H1 (cell line): ENCODE measurements at regions of chr6 and their contacts with region 1.

Region 1: DNA sequence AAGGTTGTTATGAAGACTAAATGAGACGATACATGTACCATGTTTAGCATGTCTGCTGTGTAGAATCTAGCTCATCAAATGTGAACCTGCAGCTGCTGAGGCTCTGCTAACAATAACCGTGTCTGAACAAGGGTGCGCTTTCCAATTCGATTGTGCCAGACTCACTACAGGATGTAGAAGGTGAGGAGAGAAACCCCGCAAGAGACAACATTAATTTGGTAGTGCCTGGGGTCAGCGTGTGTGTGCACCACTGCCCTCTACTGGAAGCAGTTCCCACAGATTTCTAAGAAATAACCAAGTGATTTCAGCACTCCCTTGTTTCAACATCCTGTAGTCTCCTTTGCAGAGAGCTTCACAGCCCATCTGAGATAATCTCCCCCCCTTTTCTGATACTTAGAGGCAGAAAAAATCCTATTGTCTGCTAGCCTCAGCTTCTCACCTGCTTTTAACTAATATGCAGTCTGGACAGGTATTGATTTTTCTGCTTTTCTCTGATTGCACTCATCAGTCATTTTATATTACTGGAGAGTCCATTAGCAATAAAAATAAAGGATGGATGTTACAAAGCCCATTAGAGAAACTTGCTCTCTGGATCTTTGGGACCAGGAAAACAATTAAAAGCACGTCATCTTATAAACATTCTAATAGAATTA is 96.7 kb upstream of the BACH2 start:
- DNase-seq: peak; percentile 47 to 80
- H3K4me3 ChIP-seq: no peak overlapping the region
- H3K27ac ChIP-seq: no peak overlapping the region
- H3K4me1 ChIP-seq: peaks cover 0 to 5% (median 1%) of the 10 kb centered on the region in 4 experiments; a peak in 2 of 7 replicates
- H3K27me3 ChIP-seq: no peaks in the 10 kb centered on the region
- CTCF ChIP-seq: peak; percentile 66 to 88 (median 81)
- EP300 ChIP-seq: no peak
- POLR2A ChIP-seq: no peak
- RAD21 ChIP-seq: peak; percentile 87 to 89

Region 2: GRCh38 chr6:90078513-90079289 is 314.7 kb before region 1 on chr6:
- CTCF ChIA-PET with region 1: no interaction called
- POLR2A ChIA-PET with region 1: no interaction called
- DNase-seq: no peak
- H3K4me3 ChIP-seq: no peak overlapping the region
- H3K27ac ChIP-seq: no peak overlapping the region
- H3K4me1 ChIP-seq: no peaks in the 10 kb centered on the region
- H3K27me3 ChIP-seq: no peaks in the 10 kb centered on the region
- CTCF ChIP-seq: no peak
- EP300 ChIP-seq: no peak
- POLR2A ChIP-seq: no peak
- RAD21 ChIP-seq: no peak

Region 3: GRCh38 chr6:90285611-90286381 is 107.6 kb before region 1 on chr6:
- CTCF ChIA-PET with region 1: interaction called, 94 read pairs
- POLR2A ChIA-PET with region 1: interaction called, 4 read pairs
- DNase-seq: no peak
- H3K4me3 ChIP-seq: no peak overlapping the region
- H3K27ac ChIP-seq: no peak overlapping the region
- H3K4me1 ChIP-seq: peaks cover 7 to 19% (median 12%) of the 10 kb centered on the region in 4 experiments; a peak in 6 of 7 replicates
- H3K27me3 ChIP-seq: no peaks in the 10 kb centered on the region
- CTCF ChIP-seq: no peak
- EP300 ChIP-seq: peak in 1 of 2 experiments; percentile 40; a peak in 1 of 3 replicates
- POLR2A ChIP-seq: no peak
- RAD21 ChIP-seq: 0 out of 4 replicates have a peak, but pooled peaks of 1 of the 2 experiments have one; percentile 20

Region 4: GRCh38 chr6:90343581-90343980 is 49.8 kb before region 1 on chr6:
- CTCF ChIA-PET with region 1: interaction called, 17 read pairs
- POLR2A ChIA-PET with region 1: no interaction called
- DNase-seq: no peak
- H3K4me3 ChIP-seq: no peak overlapping the region
- H3K27ac ChIP-seq: no peak overlapping the region
- H3K4me1 ChIP-seq: no peaks in the 10 kb centered on the region
- H3K27me3 ChIP-seq: no peaks in the 10 kb centered on the region
- CTCF ChIP-seq: no peak
- EP300 ChIP-seq: no peak
- POLR2A ChIP-seq: no peak
- RAD21 ChIP-seq: no peak

Region 5: GRCh38 chr6:90361174-90361573 is 32.2 kb before region 1 on chr6:
- CTCF ChIA-PET with region 1: interaction called, 11 read pairs
- POLR2A ChIA-PET with region 1: no interaction called
- DNase-seq: no peak
- H3K4me3 ChIP-seq: no peak overlapping the region
- H3K27ac ChIP-seq: no peak overlapping the region
- H3K4me1 ChIP-seq: peaks cover 0 to 8% (median 2%) of the 10 kb centered on the region in 4 experiments; a peak in 3 of 7 replicates
- H3K27me3 ChIP-seq: no peaks in the 10 kb centered on the region
- CTCF ChIP-seq: no peak
- EP300 ChIP-seq: no peak
- POLR2A ChIP-seq: no peak
- RAD21 ChIP-seq: no peak

Region 6: DNA sequence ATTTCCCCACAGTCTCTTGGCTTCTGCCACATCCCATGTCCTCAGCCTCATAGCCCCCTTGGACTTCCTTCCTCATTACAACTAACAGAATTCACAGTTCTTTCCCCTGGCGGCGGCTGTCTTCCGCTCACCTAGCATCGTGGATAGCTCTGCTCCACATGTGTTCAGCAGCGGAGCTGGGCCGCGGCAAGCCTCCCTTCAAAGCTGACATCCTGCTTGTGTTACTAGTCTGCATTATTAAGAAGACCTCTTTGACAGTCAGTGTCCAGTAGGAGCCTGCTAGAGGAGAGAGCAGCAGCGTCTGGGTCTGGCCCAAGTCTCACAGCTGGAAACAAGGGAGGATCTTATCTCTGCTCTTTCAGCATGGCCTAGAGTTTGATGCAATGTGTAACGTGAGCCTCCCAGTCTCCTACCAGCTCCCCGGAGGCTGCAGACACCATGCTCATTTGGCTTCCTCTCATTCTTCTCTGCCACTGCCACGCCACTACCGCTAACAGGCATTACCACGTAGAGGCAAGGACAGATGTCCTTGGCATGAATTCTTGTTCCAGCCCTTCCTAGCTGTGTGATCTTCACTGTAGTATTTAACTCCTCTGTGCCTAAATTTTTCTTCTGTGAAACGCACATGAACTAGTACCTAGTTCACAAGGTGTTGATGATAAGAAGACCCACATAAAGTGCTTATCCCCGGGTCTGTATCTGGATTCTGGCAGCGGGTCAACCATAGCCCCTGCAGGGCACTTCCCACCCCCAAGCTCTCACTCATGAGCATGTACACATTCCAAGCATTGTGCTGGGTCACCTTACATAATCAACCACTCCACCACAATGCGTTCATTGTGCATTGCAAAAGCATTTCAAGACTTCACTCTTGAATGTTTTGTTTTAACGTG is 10.4 kb after region 1 on chr6:
- CTCF ChIA-PET with region 1: interaction called, 36 read pairs
- POLR2A ChIA-PET with region 1: interaction called, 4 read pairs
- DNase-seq: peak in 1 of 2 experiments; percentile 54
- H3K4me3 ChIP-seq: no peak overlapping the region
- H3K27ac ChIP-seq: no peak overlapping the region
- H3K4me1 ChIP-seq: peaks cover 0 to 10% (median 7%) of the 10 kb centered on the region in 4 experiments; a peak in 6 of 7 replicates
- H3K27me3 ChIP-seq: no peaks in the 10 kb centered on the region
- CTCF ChIP-seq: no peak
- EP300 ChIP-seq: no peak
- POLR2A ChIP-seq: no peak
- RAD21 ChIP-seq: no peak

Region 7: DNA sequence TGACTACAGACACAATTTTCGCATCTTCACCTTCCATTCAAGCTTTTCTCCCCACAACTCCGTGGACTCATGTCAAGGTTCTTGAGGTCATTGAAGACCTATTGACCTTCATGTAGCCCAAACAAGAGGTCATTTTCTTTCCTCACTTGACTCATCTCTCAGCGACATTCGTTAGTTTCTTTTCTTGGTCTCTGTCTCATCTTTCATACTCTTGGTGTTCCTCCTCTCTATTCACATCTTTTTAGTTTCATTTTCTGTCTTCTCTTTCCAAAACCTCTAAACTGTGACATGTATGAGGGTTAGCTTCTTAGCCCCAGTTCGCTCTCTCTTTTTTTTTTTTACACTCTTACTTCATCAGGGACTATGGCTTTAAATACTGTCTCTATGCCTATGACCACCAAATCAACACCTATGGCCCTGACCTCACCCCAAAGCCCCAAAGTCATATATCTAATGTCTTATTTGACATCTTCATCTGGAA is 31.8 kb after region 1 on chr6:
- CTCF ChIA-PET with region 1: interaction called, 20 read pairs
- POLR2A ChIA-PET with region 1: interaction called, 3 read pairs
- DNase-seq: no peak
- H3K4me3 ChIP-seq: no peak overlapping the region
- H3K27ac ChIP-seq: no peak overlapping the region
- H3K4me1 ChIP-seq: no peaks in the 10 kb centered on the region
- H3K27me3 ChIP-seq: no peaks in the 10 kb centered on the region
- CTCF ChIP-seq: no peak
- EP300 ChIP-seq: no peak
- POLR2A ChIP-seq: no peak
- RAD21 ChIP-seq: no peak